Endothelial cell of umbilical vein (primary cell): ENCODE measurements at regions of chr12 and their contacts with region 1.

Region 1: GRCh38 chr12:120086801-120087621 is 29.5 kb downstream of the RAB35 start:
- DNase-seq: peak; percentile 99
- H3K4me3 ChIP-seq: peak overlapping the region in 2 of 3 experiments; percentile 17 to 37
- H3K27ac ChIP-seq: peak overlapping the region; percentile 11
- H3K4me1 ChIP-seq: peaks cover 6% of the 10 kb centered on the region
- H3K27me3 ChIP-seq: no peaks in the 10 kb centered on the region
- CTCF ChIP-seq: peak; percentile 98 to 100
- POLR2A ChIP-seq: peak; percentile 50

Region 2: DNA sequence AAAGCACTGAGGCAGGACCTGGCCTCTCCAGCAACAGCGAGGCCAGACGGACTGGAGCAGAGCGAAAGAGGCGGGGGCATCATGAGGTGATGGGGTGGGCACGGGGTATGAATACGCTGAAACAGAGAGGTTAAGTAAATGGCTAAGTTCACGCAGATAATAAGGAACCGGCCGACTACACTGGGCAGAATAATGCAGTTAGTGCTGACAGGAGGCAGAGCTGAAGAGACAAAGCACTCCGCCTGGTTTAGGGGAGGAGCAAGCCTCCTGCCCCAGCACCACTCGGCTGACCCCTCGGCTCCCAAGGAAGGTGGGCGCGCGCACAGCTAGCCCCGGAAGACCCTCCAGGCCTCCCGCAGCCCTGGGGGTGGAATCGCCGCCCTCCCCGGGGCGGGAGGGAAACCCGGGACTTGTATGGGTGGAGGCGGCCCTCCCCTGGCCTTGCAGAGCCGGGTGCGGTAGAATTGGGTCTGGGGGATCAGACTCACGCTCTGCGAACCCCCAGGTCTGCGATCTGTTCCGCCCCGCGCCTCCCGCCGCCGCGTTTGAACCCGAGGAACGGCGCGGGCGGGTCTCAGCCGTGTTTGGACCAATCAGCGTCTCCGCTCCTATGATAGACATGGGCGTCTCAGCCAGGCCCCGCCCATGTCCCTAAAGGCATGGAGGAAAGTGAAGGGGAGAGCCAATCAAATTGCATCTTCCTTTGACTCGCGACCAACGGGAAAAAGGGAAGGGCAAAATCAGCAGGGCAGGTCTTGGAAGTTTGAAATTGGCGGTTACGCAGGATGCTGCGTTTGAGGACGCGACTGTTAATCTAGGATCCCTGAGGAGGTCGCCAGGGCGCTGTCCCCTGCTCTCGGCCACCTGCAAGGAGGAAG is 210.0 kb before region 1 on chr12 and contains the start of gene CIT:
- CTCF ChIA-PET with region 1: no interaction called
- POLR2A ChIA-PET with region 1: no interaction called
- dilution Hi-C with region 1: no loop called
- intact Hi-C with region 1: loop called (anchors 2 kb)
- DNase-seq: peak; percentile 96
- H3K4me3 ChIP-seq: peak within 1 kb of the TSS; percentile 79 to 96 (median 89)
- H3K27ac ChIP-seq: peak within 1 kb of the TSS; percentile 45
- H3K4me1 ChIP-seq: peaks cover 4% of the 10 kb centered on the region
- H3K27me3 ChIP-seq: peaks cover 0 to 4% of the 10 kb centered on the region in 2 experiments
- CTCF ChIP-seq: no peak
- POLR2A ChIP-seq: no peak
- total RNA-seq, gene CIT: 50.1 and 61.8 TPM in 2 replicates

Region 3: GRCh38 chr12:119938049-119938667 is 148.9 kb before region 1 on chr12:
- CTCF ChIA-PET with region 1: no interaction called
- POLR2A ChIA-PET with region 1: no interaction called
- dilution Hi-C with region 1: no loop called
- intact Hi-C with region 1: loop called (anchors 2 kb)
- DNase-seq: peak; percentile 51
- H3K4me3 ChIP-seq: no peak overlapping the region
- H3K27ac ChIP-seq: no peak overlapping the region
- H3K4me1 ChIP-seq: no peaks in the 10 kb centered on the region
- H3K27me3 ChIP-seq: no peaks in the 10 kb centered on the region
- CTCF ChIP-seq: peak; percentile 76 to 83
- POLR2A ChIP-seq: no peak

Region 4: GRCh38 chr12:119988782-119989668 is 98.0 kb before region 1 on chr12 and contains the start of gene BICDL1:
- CTCF ChIA-PET with region 1: interaction called, 4 read pairs
- POLR2A ChIA-PET with region 1: no interaction called
- dilution Hi-C with region 1: no loop called
- intact Hi-C with region 1: loop called (anchors 1 kb)
- DNase-seq: peak; percentile 25
- H3K4me3 ChIP-seq: peak within 1 kb of the TSS in 2 of 3 experiments; percentile 11 to 46
- H3K27ac ChIP-seq: no peak within 1 kb of the TSS
- H3K4me1 ChIP-seq: no peaks in the 10 kb centered on the region
- H3K27me3 ChIP-seq: peaks cover 31 to 43% of the 10 kb centered on the region in 2 experiments
- CTCF ChIP-seq: no peak
- POLR2A ChIP-seq: no peak
- total RNA-seq, gene BICDL1: not detected in 2 replicates

Region 5: DNA sequence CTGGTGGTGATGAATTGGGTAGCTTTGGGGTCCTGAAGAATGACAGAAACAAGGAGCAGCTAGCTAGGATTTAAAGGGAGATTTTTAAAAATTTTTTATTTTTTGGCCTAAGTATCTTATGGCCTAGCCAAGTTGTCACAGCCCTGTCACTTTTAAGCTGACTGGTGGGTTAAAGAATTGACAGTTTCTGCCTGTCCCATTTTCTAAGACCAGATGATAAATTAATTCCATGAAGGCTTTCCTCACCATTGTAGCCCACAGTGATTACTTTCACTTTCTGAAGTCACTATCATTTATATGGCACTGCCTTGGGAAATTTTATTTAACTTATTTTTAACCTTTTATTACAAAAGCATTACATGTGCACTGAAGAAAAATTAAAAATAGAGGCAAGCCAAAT is 54.8 kb before region 1 on chr12:
- CTCF ChIA-PET with region 1: no interaction called
- POLR2A ChIA-PET with region 1: no interaction called
- dilution Hi-C with region 1: no loop called
- intact Hi-C with region 1: no loop called
- DNase-seq: no peak
- H3K4me3 ChIP-seq: no peak overlapping the region
- H3K27ac ChIP-seq: no peak overlapping the region
- H3K4me1 ChIP-seq: no peaks in the 10 kb centered on the region
- H3K27me3 ChIP-seq: no peaks in the 10 kb centered on the region
- CTCF ChIP-seq: no peak
- POLR2A ChIP-seq: no peak

Region 6: DNA sequence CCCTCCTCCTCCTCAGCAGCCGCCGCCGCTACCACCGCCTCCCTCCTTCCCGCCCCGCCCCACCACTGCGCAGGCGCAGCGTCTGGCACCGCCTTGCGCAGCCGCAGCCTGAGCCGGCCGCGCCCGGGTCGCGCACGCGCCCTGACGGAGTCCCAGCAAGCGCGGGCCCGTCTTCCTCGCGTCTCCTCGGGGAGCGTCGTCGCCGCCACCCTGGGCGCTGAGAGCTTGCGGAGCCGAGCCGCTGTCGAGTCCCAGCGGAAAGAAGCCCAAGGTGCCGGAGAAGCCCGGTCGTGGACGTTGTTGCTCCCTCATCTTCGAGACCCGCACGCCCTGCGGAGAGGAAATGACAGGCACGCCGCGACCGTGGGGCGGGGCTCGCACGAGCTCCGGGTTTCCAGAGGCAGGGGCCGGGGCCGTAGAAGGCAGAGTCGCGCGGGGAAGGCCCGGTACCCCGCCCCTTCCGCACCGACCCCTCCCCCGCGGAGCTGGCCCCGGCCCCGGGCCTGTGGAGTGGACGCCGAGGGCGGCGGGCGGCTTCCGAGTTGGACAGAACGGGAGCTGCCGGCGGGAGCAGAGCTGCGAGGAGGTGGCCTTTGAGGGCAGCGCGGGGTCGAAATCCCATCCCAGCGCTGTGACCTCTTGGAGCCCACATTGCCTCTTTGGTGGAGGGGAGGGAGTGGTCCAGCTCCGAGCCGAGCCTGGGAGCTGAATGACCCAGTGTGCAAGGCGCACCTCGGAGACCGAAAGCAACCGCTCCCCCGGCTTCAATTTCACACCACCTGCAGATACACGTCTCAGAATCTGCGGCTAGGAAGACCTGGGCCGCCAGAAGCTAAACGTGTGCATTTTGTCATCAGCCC is 30.0 kb after region 1 on chr12:
- CTCF ChIA-PET with region 1: interaction called, 7 read pairs
- POLR2A ChIA-PET with region 1: no interaction called
- dilution Hi-C with region 1: no loop called
- intact Hi-C with region 1: loop called (anchors 1 kb)
- DNase-seq: peak; percentile 96
- H3K4me3 ChIP-seq: peak overlapping the region; percentile 49 to 72 (median 63)
- H3K27ac ChIP-seq: peak overlapping the region; percentile 48
- H3K4me1 ChIP-seq: peaks cover 29% of the 10 kb centered on the region
- H3K27me3 ChIP-seq: no peaks in the 10 kb centered on the region
- CTCF ChIP-seq: no peak
- POLR2A ChIP-seq: peak; percentile 88

Region 7: DNA sequence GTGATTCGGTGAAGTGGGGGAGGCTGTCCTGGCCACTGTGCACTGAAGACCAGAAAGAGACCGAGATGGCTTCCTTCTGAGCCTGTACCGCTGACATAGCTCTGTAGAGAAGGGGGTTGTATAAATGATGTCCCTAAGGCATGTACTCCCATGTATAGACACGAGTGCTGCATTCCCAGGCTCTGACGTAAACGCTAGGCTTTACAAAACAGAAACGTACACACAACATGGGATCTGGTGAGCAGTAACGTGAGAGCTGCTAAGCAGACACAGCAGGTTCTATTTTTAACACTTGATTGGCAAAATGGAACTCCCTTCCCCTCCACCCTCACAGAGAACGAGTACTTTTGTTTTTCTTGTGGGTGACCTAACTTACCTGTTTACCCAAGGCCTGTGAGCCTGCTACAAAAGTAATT is 674.5 kb after region 1 on chr12:
- CTCF ChIA-PET with region 1: no interaction called
- POLR2A ChIA-PET with region 1: no interaction called
- dilution Hi-C with region 1: no loop called
- intact Hi-C with region 1: no loop called
- DNase-seq: no peak
- H3K4me3 ChIP-seq: no peak overlapping the region
- H3K27ac ChIP-seq: no peak overlapping the region
- H3K4me1 ChIP-seq: no peaks in the 10 kb centered on the region
- H3K27me3 ChIP-seq: no peaks in the 10 kb centered on the region
- CTCF ChIP-seq: no peak
- POLR2A ChIP-seq: no peak